Activated naive CD4-positive, alpha-beta T cell treated with anti-CD3 and anti-CD28 coated beads for 36 hours (primary cell): ENCODE measurements at regions of chr1 and their contacts with region 1.

Region 1: GRCh38 chr1:983799-984473 is 2.0 kb upstream of the PERM1 start:
- DNase-seq: peak; percentile 73
- H3K4me3 Mint-ChIP-seq: no peak overlapping the region
- H3K27ac Mint-ChIP-seq: no peak overlapping the region
- H3K4me1 Mint-ChIP-seq: no peaks in the 10 kb centered on the region
- H3K27me3 Mint-ChIP-seq: peaks cover 17% of the 10 kb centered on the region

Region 2: GRCh38 chr1:1013105-1013921 is 29.4 kb after region 1 on chr1 and contains the start of gene ISG15:
- CTCF ChIA-PET with region 1: interaction called, 14 read pairs
- intact Hi-C with region 1: no loop called
- DNase-seq: peak; percentile 92
- H3K4me3 Mint-ChIP-seq: peak within 1 kb of the TSS; percentile 94
- H3K27ac Mint-ChIP-seq: peak within 1 kb of the TSS; percentile 86
- H3K4me1 Mint-ChIP-seq: peaks cover 29% of the 10 kb centered on the region
- H3K27me3 Mint-ChIP-seq: peaks cover 4% of the 10 kb centered on the region
- total RNA-seq, gene ISG15: 143 to 147 TPM

Region 3: DNA sequence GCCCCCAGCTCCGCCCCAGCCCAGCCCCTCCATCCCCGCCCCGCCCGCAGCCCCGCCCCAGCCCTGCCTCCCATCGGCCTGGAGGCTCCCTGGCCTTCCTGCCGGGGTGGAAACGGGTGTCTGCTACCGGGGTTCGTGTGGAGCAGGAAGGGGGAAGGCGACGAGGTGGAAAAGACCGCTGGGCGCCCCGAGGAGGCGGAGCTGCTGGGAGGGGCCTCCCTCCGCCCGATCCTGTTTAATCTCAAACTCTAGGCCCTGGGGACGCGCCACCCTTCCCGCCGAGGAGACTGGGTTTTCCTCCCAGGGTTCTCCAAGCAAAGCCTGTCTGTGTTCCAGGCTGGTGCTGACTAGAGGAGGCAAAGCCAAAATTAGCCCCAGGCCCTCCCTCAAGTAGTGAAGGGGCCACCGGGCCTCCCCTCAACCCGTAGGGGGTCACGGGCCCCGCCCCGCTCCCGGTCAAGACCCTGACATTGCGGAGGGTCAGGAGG is 173.5 kb after region 1 on chr1:
- CTCF ChIA-PET with region 1: no interaction called
- intact Hi-C with region 1: no loop called
- DNase-seq: peak; percentile 79
- H3K4me3 Mint-ChIP-seq: peak overlapping the region; percentile 75
- H3K27ac Mint-ChIP-seq: peak overlapping the region; percentile 46
- H3K4me1 Mint-ChIP-seq: no peaks in the 10 kb centered on the region
- H3K27me3 Mint-ChIP-seq: no peaks in the 10 kb centered on the region

Region 4: DNA sequence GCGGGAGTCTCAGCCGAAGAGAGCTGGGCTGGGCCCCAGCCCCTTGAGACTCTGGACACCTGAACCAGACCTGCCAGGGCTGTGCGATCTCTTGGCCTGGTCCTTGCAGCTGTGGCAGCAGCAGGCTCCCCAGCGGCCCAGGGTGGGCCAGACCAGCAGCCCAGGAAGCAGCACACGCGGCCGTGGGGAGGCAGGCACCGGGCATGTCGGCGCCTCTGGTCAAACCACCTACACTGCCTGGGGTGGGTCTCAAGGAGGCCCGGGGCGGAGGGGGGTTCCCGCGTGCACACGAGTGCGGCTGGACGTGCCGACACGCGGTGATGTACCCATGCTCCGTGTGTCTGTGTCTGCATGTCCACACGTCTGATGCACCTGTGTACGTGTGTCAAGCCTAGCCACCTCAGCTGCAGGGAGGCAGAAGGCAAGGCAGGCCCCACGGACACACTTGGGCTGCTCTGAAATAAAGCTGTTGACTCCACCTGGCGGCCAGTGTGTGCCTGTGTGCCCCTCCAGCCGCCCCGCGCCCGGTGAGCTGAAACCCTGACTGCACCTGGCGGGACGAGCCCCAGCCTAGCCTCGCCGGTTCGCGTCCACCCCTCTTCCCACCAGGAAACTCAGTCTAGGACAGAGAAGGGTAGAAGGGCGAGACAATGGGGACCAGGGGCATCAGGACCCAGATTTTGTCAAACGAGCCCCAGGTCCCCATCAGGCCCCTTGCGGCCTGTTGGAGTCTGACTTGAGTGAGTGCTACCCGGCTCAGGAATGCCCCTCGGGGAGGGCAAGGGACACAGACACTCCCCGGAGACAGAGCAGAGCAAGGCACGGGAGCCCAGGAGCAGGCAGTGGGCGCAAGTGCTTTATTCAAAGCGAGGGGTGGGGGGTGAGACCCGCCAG is 307.9 kb after region 1 on chr1:
- CTCF ChIA-PET with region 1: interaction called, 3 read pairs
- intact Hi-C with region 1: loop called (anchors 5 kb)
- DNase-seq: peak; percentile 73
- H3K4me3 Mint-ChIP-seq: no peak overlapping the region
- H3K27ac Mint-ChIP-seq: no peak overlapping the region
- H3K4me1 Mint-ChIP-seq: no peaks in the 10 kb centered on the region
- H3K27me3 Mint-ChIP-seq: no peaks in the 10 kb centered on the region